MCF 10A (cell line): ENCODE measurements at regions of chr4 and their contacts with region 1.

Region 1: GRCh38 chr4:139015269-139015947 is at the start of gene NOCT:
- DNase-seq: peak; percentile 94
- H3K4me3 Mint-ChIP-seq: peak within 1 kb of the TSS; percentile 72
- H3K27ac Mint-ChIP-seq: peak within 1 kb of the TSS; percentile 95
- H3K4me1 Mint-ChIP-seq: peaks cover 38% of the 10 kb centered on the region
- H3K27me3 Mint-ChIP-seq: no peaks in the 10 kb centered on the region
- CTCF ChIP-seq: no peak
- total RNA-seq, gene NOCT: 16.5 and 25.5 TPM in 2 replicates

Region 2: GRCh38 chr4:138870737-138871554 is 144.5 kb before region 1 on chr4:
- CTCF ChIA-PET with region 1: no interaction called
- POLR2A ChIA-PET with region 1: no interaction called
- intact Hi-C with region 1: no loop called
- DNase-seq: peak; percentile 81
- H3K4me3 Mint-ChIP-seq: no peak overlapping the region
- H3K27ac Mint-ChIP-seq: no peak overlapping the region
- H3K4me1 Mint-ChIP-seq: peaks cover 11% of the 10 kb centered on the region
- H3K27me3 Mint-ChIP-seq: no peaks in the 10 kb centered on the region
- CTCF ChIP-seq: peak; percentile 78

Region 3: DNA sequence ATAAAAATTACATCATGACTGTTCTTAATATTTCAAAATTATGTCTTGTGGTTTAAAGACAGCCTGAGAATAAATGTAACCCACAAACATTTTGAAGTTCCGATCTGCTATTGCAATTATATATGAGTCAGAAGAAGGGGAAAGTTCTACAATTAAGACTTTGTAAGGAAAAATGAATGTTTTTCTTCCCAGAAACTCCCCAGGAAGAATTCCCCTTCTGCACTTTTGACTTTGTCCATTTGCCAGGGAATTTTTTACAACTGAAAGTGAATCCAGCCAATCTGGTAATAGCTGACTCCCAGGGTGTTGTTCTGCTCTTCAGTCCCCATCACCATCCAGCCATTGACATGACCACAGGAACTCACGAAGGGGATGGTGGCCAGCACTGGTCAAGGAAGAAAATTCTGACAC is 61.4 kb before region 1 on chr4:
- CTCF ChIA-PET with region 1: interaction called, 3 read pairs
- POLR2A ChIA-PET with region 1: interaction called, 36 read pairs
- intact Hi-C with region 1: no loop called
- DNase-seq: peak; percentile 86
- H3K4me3 Mint-ChIP-seq: peak overlapping the region; percentile 38
- H3K27ac Mint-ChIP-seq: no peak overlapping the region
- H3K4me1 Mint-ChIP-seq: peaks cover 19% of the 10 kb centered on the region
- H3K27me3 Mint-ChIP-seq: no peaks in the 10 kb centered on the region
- CTCF ChIP-seq: no peak

Region 4: GRCh38 chr4:139083956-139084803 is 68.8 kb after region 1 on chr4:
- CTCF ChIA-PET with region 1: no interaction called
- POLR2A ChIA-PET with region 1: interaction called, 107 read pairs
- intact Hi-C with region 1: loop called (anchors 5 kb)
- DNase-seq: peak; percentile 91
- H3K4me3 Mint-ChIP-seq: peak overlapping the region; percentile 97
- H3K27ac Mint-ChIP-seq: peak overlapping the region; percentile 95
- H3K4me1 Mint-ChIP-seq: peaks cover 15% of the 10 kb centered on the region
- H3K27me3 Mint-ChIP-seq: no peaks in the 10 kb centered on the region
- CTCF ChIP-seq: no peak

Region 5: GRCh38 chr4:139243448-139244365 is 228.3 kb after region 1 on chr4:
- CTCF ChIA-PET with region 1: no interaction called
- POLR2A ChIA-PET with region 1: no interaction called
- intact Hi-C with region 1: loop called (anchors 5 kb)
- DNase-seq: peak; percentile 98
- H3K4me3 Mint-ChIP-seq: no peak overlapping the region
- H3K27ac Mint-ChIP-seq: peak overlapping the region; percentile 93
- H3K4me1 Mint-ChIP-seq: peaks cover 27% of the 10 kb centered on the region
- H3K27me3 Mint-ChIP-seq: no peaks in the 10 kb centered on the region
- CTCF ChIP-seq: no peak

Region 6: GRCh38 chr4:139628184-139629012 is 613.0 kb after region 1 on chr4:
- CTCF ChIA-PET with region 1: no interaction called
- POLR2A ChIA-PET with region 1: no interaction called
- intact Hi-C with region 1: no loop called
- DNase-seq: no peak
- H3K4me3 Mint-ChIP-seq: no peak overlapping the region
- H3K27ac Mint-ChIP-seq: no peak overlapping the region
- H3K4me1 Mint-ChIP-seq: peaks cover under 1% of the 10 kb centered on the region
- H3K27me3 Mint-ChIP-seq: no peaks in the 10 kb centered on the region
- CTCF ChIP-seq: no peak